Activated CD4-positive, alpha-beta T cell treated with anti-CD3 and anti-CD28 coated beads, Interleukin-2, amount 10 ng/mL, durations not matched to agents 24 days and 14 days (primary cell): ENCODE measurements at regions of chr2 and their contacts with region 1.

Region 1: DNA sequence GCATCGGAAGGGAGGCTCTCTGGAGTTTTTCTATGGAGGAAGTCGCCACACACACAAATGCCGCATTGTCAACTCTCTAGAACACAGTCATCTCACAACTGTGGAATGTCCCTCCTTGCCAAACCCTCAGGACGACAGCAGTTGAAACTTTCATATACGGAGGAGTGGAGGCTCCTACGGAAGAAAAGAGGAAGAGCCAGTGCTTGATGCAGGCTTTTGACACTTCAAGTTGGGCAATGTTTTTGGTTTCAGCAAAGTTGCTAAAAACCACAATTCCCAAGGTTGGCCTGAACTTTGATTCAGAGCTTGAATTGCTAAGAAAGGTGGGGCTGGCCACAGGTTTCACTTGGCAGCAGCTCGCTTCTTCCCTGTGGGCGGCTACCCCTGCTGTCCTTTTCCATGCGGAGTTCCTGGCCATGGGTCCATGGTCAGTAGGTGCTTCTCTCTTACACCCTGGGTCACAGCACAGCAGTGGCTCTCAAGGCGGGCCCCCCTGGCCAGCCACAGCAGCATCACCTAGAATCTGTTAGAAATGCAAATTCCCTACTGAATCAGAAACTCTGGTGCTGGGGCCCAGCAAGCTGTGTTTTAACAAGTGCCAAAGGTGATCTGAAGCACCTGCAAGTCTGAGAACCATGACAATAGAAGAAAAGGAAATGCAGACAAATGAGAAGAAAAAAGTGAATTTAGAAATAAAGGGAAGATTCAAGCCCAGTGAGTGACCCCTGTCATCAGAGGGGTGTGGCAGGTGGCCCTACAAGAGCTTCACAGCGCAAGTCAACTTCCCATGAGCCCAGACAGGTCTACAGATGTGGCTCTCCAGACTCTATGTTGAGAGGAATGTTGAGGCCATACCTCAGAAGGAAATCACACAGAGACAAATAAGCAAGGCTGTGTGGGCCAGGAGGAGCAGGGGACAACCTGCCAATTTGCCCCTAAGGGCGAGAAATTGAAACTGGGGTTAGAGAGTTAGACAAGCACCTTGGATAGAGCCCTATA is 856.4 kb downstream of the RNF144A start:
- DNase-seq: peak; percentile 79
- H3K4me3 Mint-ChIP-seq: peak overlapping the region; percentile 25
- H3K27ac Mint-ChIP-seq: peak overlapping the region; percentile 84
- H3K4me1 Mint-ChIP-seq: peaks cover 36% of the 10 kb centered on the region
- H3K27me3 Mint-ChIP-seq: no peaks in the 10 kb centered on the region

Region 2: GRCh38 chr2:7437716-7438632 is 335.7 kb before region 1 on chr2:
- intact Hi-C with region 1: loop called (anchors 1 kb)
- DNase-seq: peak; percentile 75
- H3K4me3 Mint-ChIP-seq: peak overlapping the region; percentile 53
- H3K27ac Mint-ChIP-seq: peak overlapping the region; percentile 96
- H3K4me1 Mint-ChIP-seq: peaks cover 65% of the 10 kb centered on the region
- H3K27me3 Mint-ChIP-seq: no peaks in the 10 kb centered on the region

Region 3: GRCh38 chr2:7588295-7588694 is 185.4 kb before region 1 on chr2:
- intact Hi-C with region 1: loop called (anchors 5 kb)
- DNase-seq: peak; percentile 50
- H3K4me3 Mint-ChIP-seq: peak overlapping the region; percentile 2
- H3K27ac Mint-ChIP-seq: peak overlapping the region; percentile 68
- H3K4me1 Mint-ChIP-seq: peaks cover 22% of the 10 kb centered on the region
- H3K27me3 Mint-ChIP-seq: no peaks in the 10 kb centered on the region

Region 4: DNA sequence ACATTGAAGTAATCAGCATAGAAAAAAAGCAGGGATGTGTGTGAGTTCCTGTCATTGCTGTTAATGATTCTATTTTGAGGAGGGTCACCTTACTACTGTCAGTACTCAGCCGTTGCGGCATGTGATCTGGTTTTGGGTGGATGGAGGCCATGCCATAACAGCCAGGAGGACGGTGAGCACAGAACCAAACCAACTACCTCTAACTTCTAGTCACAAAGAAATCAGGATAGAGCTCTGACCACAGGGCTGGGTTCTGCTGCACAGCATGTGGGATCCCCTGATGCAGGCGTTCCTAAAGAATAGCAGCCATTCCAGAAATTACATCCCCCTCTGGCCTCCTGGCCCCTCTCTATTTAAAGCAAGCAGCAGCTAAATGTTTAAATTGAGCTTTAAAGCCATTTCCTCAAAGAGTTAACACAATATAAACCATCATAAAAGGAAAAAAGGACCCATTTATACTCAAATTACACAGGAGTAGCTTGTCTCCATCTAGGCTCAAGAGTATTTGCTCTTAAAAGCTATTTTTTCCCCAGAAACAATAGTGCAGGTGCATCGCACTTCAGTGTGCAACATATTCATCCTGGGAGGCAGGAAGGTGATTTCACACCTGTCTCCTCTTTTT is 70.0 kb before region 1 on chr2:
- intact Hi-C with region 1: no loop called
- DNase-seq: no peak
- H3K4me3 Mint-ChIP-seq: no peak overlapping the region
- H3K27ac Mint-ChIP-seq: no peak overlapping the region
- H3K4me1 Mint-ChIP-seq: peaks cover 10% of the 10 kb centered on the region
- H3K27me3 Mint-ChIP-seq: peaks cover 3% of the 10 kb centered on the region

Region 5: DNA sequence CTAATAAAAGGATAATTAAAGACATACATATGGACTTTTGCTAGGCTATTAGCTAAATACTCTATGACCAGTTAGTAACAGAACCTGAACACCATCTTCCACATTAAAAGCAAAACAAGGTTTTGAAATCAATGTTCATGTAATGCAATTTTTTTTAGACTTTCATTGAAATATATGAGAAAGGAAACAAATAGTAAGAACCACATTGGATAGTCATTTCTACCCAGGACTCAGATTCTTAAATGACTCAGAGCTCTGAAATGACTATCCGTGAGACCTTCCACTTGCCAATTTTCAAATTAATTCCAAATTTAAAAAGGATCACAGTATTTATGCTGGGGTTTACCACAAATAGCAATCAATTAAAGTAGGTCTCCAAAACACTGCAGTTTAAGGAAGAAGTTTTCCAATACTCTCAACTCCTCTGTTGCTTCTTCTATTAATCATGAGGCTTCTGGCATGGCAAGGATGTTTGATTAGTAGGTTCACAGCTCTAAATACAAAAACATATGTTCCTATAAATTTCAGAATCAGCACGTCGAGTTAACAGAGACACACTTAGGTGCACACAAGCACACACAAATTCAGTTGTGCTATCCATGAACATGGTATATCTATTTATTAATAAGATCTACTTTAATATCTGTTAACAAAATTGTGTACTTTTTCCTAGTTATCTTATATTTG is 15.4 kb before region 1 on chr2:
- intact Hi-C with region 1: loop called (anchors 1 kb)
- DNase-seq: peak; percentile 43
- H3K4me3 Mint-ChIP-seq: peak overlapping the region; percentile 15
- H3K27ac Mint-ChIP-seq: peak overlapping the region; percentile 82
- H3K4me1 Mint-ChIP-seq: peaks cover 16% of the 10 kb centered on the region
- H3K27me3 Mint-ChIP-seq: no peaks in the 10 kb centered on the region

Region 6: GRCh38 chr2:7819316-7819715 is 45.7 kb after region 1 on chr2:
- intact Hi-C with region 1: no loop called
- DNase-seq: no peak
- H3K4me3 Mint-ChIP-seq: no peak overlapping the region
- H3K27ac Mint-ChIP-seq: no peak overlapping the region
- H3K4me1 Mint-ChIP-seq: no peaks in the 10 kb centered on the region
- H3K27me3 Mint-ChIP-seq: no peaks in the 10 kb centered on the region

Region 7: DNA sequence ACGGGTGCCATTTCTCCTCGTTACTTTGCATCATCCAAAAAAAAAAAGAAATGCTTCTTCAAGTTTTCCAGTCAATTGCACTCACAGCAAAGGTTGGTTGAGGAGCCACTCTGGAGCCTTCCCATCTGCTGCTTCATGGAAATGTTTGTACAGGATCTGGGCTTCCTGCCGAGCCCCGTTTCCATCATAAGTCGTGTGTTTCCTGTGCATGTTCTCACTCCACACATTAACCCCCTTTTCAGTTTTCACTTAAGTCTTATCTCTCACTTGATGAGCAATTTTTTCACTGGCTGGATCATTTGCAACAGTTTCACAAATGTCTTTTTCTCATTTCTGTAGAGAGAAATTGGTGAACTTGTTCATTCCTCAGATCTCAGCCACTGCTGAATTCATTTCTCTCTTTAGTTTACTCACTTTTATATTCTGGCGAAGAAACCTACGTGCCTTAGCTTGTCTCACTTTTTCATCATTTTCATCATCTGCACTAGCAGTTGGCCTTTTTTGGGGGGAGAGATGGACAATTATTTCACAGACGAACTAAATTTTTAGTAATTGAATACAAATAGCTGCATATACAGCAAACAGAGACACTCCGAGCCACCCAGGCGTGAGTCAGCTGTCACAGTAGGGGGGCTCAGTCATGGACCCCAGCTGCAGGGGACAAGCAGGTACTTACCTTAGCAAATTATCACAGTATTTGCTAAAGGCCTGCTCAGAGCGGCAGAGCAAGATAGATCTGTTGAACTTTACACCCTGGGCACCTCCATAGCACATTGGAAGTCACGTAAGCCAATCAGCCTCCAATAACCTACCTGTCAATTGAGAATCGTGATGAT is 157.4 kb after region 1 on chr2:
- intact Hi-C with region 1: loop called (anchors 5 kb)
- DNase-seq: peak; percentile 54
- H3K4me3 Mint-ChIP-seq: peak overlapping the region; percentile 1
- H3K27ac Mint-ChIP-seq: peak overlapping the region; percentile 76
- H3K4me1 Mint-ChIP-seq: peaks cover 10% of the 10 kb centered on the region
- H3K27me3 Mint-ChIP-seq: no peaks in the 10 kb centered on the region

Region 8: DNA sequence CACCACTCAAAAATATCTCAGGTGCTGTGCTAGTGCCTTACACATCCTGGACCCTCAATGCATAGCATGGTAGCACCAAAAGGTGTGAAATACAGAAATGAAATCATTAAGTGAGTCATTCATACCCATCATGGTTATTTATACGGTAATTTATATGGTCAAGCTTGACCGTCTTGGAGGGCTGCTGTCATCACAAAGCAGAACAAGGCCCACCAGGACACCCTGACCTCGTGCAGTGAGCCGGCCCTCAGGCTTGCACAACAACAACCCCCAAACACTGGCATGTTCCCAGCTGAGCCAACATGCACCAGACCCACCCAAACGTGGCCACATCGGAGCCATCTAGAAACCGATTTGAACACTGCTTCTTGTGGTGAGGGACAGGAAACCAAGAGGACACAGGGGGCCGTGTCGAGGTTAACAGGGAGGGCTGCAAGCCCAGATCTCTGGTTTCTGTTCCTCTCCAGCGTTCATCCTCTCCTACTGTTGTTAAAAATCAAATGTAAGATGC is 529.7 kb after region 1 on chr2:
- intact Hi-C with region 1: loop called (anchors 10 kb)
- DNase-seq: peak; percentile 94
- H3K4me3 Mint-ChIP-seq: peak overlapping the region; percentile 71
- H3K27ac Mint-ChIP-seq: peak overlapping the region; percentile 83
- H3K4me1 Mint-ChIP-seq: peaks cover 72% of the 10 kb centered on the region
- H3K27me3 Mint-ChIP-seq: no peaks in the 10 kb centered on the region

Region 9: GRCh38 chr2:9675415-9676351 is 1902.0 kb after region 1 on chr2:
- intact Hi-C with region 1: no loop called
- DNase-seq: no peak
- H3K4me3 Mint-ChIP-seq: no peak overlapping the region
- H3K27ac Mint-ChIP-seq: no peak overlapping the region
- H3K4me1 Mint-ChIP-seq: peaks cover 4% of the 10 kb centered on the region
- H3K27me3 Mint-ChIP-seq: peaks cover 3% of the 10 kb centered on the region